ENCODE measurements at regions of chr2 and their contacts with region 1.

Region 1: DNA sequence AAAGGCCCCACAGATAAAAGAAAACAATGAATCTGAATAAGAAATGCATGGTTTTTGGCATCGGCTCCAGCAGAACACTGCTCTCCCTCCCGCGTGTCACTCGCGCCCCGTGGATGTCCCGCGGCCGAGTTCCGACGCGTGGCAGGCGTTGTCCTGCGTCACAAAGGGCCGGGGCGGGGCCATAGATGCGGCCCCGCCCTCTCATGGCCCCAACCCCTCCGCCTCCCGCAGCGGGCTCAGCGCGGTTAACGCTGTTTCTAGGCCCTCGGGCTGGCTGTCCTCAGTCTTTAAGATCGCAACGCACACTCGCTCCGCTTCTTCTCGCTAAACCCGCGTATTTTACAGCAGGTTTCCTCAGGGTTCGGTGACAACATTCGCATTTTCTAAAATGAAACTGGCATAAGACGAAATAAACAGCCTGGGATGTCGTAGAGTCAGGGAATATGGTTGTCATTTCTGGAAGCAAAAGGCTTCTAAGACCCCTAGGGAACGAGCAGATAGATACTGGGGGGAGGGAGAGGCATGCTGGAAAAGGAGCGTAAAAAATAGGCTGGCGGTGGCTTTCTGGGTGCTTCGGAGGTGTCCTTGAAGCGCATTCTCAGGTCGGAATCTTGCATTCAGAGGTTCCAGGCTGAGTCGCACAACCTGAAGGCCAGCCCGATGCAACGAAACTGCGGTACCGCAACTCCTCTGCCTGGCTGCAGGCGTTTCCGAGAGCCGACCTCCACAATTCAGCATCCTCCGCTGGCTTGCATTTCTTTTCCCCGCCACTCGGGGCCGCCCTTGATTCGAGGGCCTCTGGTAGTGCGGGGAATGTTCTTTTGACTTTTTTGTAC is at the start of gene FKBP7:
- DNase-seq: peak; percentile 71 to 87 (median 80)
- ATAC-seq: peak; percentile 90
- H3K4me3 ChIP-seq: peak within 1 kb of the TSS; percentile 91
- H3K4me3 Mint-ChIP-seq: peak within 1 kb of the TSS; percentile 94 to 100 (median 99)
- H3K27ac ChIP-seq: peak within 1 kb of the TSS; percentile 80
- H3K27ac Mint-ChIP-seq: peak within 1 kb of the TSS; percentile 91 to 99 (median 98)
- H3K4me1 ChIP-seq: peaks cover 22 to 28% of the 10 kb centered on the region in 2 donors
- H3K4me1 Mint-ChIP-seq: peaks cover 27 to 45% (median 41%) of the 10 kb centered on the region in 7 donors
- H3K27me3 ChIP-seq: no peaks in the 10 kb centered on the region
- H3K27me3 Mint-ChIP-seq: no peaks in the 10 kb centered on the region
- total RNA-seq, gene FKBP7: 0.64 to 2.7 (median 1.9) TPM

Region 2: GRCh38 chr2:178450774-178451525 is 27.7 kb before region 1 on chr2 and contains the starts of genes PJVK and PRKRA:
- CTCF ChIA-PET with region 1: interaction called, 4 read pairs
- POLR2A ChIA-PET with region 1: interaction called, 8 read pairs
- intact Hi-C with region 1: loop called (anchors 1 kb)
- DNase-seq: peak; percentile 92 to 99 (median 93)
- ATAC-seq: peak; percentile 94
- H3K4me3 ChIP-seq: peak within 1 kb of the TSS; percentile 94
- H3K4me3 Mint-ChIP-seq: peak within 1 kb of the TSS; percentile 90 to 96 (median 90)
- H3K27ac ChIP-seq: peak within 1 kb of the TSS; percentile 100
- H3K27ac Mint-ChIP-seq: peak within 1 kb of the TSS; percentile 88 to 98 (median 95)
- H3K4me1 ChIP-seq: peaks cover 12 to 25% of the 10 kb centered on the region in 2 donors
- H3K4me1 Mint-ChIP-seq: peaks cover 12 to 36% (median 30%) of the 10 kb centered on the region in 7 donors
- H3K27me3 ChIP-seq: no peaks in the 10 kb centered on the region
- H3K27me3 Mint-ChIP-seq: peaks cover 0 to 9% (median 0%) of the 10 kb centered on the region in 5 donors
- total RNA-seq, gene PJVK: 2.1 to 6.3 (median 3.8) TPM
- total RNA-seq, gene PRKRA: 40.8 to 113 (median 59.4) TPM

Region 3: DNA sequence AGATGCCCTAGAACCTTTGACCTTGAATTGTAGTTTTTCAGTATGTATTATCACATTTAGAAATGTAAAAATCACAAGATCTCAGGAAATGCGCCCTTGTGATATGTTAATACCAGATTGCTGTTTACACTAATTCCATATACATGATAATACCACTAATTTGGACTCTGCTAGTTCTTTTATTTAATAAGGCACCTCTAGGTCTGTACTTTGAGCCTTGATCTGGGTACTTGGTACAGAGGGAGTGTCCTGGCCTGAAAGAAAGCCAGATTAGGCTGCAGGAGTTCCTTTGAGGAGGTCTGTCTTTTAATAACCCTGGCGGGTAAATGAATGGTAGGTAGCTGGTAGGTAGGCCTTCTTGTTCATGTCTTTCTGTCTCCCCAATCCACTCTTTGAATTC is 27.9 kb after region 1 on chr2:
- CTCF ChIA-PET with region 1: no interaction called
- POLR2A ChIA-PET with region 1: no interaction called
- intact Hi-C with region 1: loop called in 1 of 2 experiments (anchors 2 kb)
- DNase-seq: no peak
- ATAC-seq: no peak
- H3K4me3 ChIP-seq: no peak overlapping the region
- H3K4me3 Mint-ChIP-seq: no peak overlapping the region
- H3K27ac ChIP-seq: no peak overlapping the region
- H3K27ac Mint-ChIP-seq: peak overlapping the region in 1 of 9 donors; percentile 6
- H3K4me1 ChIP-seq: no peaks in the 10 kb centered on the region
- H3K4me1 Mint-ChIP-seq: peaks cover 0 to 19% (median 0%) of the 10 kb centered on the region in 7 donors
- H3K27me3 ChIP-seq: no peaks in the 10 kb centered on the region
- H3K27me3 Mint-ChIP-seq: no peaks in the 10 kb centered on the region

Region 4: DNA sequence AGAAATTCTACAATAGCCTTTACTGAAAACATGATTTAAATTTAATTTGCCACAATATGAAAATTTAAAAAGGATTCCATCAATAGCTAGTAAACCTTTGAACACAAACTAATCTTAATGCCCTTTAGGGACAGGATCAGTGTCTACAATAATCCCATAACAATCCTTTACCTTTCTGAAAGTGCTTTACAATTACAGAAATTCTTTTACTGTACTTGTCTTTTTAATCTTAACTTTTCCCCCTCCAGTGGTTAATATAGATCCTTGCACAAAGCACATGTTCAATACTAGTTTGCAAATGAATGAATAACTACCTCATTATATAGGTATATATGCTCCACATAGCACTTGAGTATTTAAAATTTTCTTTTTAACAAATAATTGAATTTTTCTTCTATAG is 124.2 kb after region 1 on chr2:
- CTCF ChIA-PET with region 1: no interaction called
- POLR2A ChIA-PET with region 1: no interaction called
- intact Hi-C with region 1: loop called in 1 of 2 experiments (anchors 2 kb)
- DNase-seq: no peak
- ATAC-seq: no peak
- H3K4me3 ChIP-seq: no peak overlapping the region
- H3K4me3 Mint-ChIP-seq: no peak overlapping the region
- H3K27ac ChIP-seq: no peak overlapping the region
- H3K27ac Mint-ChIP-seq: no peak overlapping the region
- H3K4me1 ChIP-seq: no peaks in the 10 kb centered on the region
- H3K4me1 Mint-ChIP-seq: peaks cover 0 to 2% (median 0%) of the 10 kb centered on the region in 7 donors
- H3K27me3 ChIP-seq: no peaks in the 10 kb centered on the region
- H3K27me3 Mint-ChIP-seq: no peaks in the 10 kb centered on the region